Ovary (tissue), 10 donors: ENCODE measurements at regions of chr4 and their contacts with region 1.

Region 1: DNA sequence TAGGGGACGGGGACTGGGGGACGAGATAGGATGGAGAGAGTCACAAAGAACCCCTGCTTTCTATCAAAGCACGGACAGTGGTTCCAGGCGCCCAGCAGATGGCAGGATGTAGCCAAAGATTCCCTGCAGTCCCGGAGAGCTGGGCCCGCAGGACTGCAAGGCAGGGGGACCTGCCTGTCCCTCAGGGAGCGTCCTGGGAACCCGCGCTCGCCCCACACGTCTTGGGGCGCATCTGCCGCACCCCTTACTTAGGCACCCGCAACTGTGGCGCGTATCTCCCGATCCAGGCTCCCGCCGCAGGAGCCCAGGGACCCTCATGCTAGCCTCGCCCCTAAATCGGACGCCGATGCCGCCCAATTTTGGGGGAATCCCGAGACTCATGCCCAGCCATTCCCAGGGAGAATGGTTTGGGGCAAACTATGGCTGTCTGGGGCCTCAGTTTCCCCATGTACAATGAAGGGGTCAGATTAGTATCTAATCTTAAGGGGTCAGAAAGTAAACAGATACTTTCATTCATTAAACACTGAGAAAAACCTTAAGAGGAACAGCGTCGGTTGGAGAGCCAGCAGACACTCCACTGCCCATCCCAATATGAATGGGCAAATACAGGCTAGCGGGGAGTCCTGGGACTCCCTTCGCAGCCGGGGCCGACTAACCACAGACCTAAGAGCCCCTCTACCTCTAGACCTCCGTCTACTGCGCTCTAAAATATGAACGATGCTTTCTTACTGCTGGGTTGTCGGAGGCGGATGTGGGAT is 581 bp upstream of the STK32B start:
- DNase-seq: peak; percentile 58 to 75 (median 65)
- H3K4me3 ChIP-seq: peak overlapping the region; percentile 47
- H3K27ac ChIP-seq: no peak overlapping the region
- H3K4me1 ChIP-seq: no peaks in the 10 kb centered on the region
- H3K27me3 ChIP-seq: no peaks in the 10 kb centered on the region
- CTCF ChIP-seq: peak in 2 of 3 donors; percentile 33 to 39
- EP300 ChIP-seq: no peak
- POLR2A ChIP-seq: no peak

Region 2: DNA sequence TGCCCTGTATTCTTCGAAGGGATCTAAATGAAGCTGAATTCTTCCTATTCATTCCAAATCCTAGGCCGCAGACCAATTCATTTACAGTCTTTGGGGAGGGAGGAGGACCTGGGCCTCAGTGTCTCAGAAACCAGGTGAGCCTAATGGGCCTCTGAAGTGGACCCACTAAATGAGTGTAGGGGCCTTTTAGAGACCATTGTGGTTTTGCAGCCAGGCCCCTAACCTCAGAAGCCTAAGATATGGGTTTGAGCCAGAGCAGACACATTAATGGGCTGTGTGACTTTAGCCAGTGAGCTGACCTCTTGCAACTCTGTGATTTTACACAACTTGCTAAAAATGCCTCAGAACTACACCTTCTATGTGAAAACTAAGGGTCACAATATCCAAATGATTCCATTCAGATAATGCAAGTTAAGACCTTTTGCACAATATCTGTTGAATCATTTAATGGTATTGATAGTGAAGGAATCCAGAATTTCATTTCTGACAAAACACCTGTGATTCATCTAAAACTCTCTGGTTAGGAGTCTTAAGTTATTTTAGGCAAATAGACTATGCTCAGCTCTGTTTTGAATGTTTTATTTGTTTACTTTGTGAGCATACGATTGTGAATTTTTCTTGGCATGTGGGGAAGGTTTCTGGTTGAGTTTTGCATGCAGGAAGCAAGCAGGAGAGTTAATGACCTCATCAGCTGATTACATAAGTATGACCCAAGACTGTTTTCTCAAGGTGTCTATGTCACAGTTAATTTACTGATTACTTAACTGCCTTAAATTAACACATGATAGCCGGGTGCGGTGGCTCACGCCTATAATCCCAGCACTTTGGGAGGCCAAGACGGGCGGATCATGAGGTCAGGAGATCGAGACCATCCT is 735.3 kb after region 1 on chr4:
- intact Hi-C with region 1: loop called in 1 of 4 experiments (anchors 10 kb)
- DNase-seq: peak in 1 of 5 donors; percentile 5
- H3K4me3 ChIP-seq: no peak overlapping the region
- H3K27ac ChIP-seq: no peak overlapping the region
- H3K4me1 ChIP-seq: no peaks in the 10 kb centered on the region
- H3K27me3 ChIP-seq: no peaks in the 10 kb centered on the region
- CTCF ChIP-seq: no peak
- EP300 ChIP-seq: no peak
- POLR2A ChIP-seq: no peak

Region 3: DNA sequence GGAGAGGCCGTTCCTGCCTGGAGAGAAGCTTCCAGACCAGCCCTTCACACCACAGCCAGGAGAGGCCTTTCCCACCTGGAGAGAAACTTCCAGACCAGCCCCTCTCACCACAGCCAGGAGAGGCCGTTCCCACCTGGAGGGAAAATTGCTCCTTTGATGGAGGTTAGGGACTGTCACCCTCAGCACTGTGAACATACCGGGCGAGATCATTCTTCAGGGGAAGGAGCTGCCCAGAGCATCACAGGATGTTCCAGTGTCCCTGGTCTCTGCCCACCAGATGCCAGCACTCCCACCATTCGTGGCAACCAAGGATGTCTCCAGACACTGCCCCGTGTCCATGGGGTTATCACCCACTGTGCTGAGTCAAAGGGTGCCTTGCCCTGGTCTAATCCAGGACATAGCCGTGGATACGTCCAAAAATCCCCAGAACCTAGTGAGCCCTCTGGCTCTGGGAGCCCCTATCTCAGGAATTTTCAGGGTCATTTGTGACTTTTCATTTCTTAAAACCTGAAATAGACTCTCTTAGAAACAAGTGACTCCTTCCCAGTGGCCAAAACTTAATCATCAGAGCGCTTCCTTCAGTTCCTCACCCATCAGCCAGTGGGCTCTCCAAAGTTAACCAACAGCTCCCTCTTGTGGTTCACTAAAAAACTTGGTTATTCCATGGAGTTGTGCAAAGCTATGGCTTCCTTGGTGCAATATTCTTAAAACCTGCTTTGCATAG is 762.0 kb after region 1 on chr4:
- intact Hi-C with region 1: loop called in 2 of 4 experiments (anchors 10 kb)
- DNase-seq: no peak
- H3K4me3 ChIP-seq: no peak overlapping the region
- H3K27ac ChIP-seq: no peak overlapping the region
- H3K4me1 ChIP-seq: no peaks in the 10 kb centered on the region
- H3K27me3 ChIP-seq: no peaks in the 10 kb centered on the region
- CTCF ChIP-seq: peak in 2 of 3 donors; percentile 52 to 55
- EP300 ChIP-seq: no peak
- POLR2A ChIP-seq: no peak